ENCODE measurements at regions of chr12 and their contacts with region 1.

Region 1: DNA sequence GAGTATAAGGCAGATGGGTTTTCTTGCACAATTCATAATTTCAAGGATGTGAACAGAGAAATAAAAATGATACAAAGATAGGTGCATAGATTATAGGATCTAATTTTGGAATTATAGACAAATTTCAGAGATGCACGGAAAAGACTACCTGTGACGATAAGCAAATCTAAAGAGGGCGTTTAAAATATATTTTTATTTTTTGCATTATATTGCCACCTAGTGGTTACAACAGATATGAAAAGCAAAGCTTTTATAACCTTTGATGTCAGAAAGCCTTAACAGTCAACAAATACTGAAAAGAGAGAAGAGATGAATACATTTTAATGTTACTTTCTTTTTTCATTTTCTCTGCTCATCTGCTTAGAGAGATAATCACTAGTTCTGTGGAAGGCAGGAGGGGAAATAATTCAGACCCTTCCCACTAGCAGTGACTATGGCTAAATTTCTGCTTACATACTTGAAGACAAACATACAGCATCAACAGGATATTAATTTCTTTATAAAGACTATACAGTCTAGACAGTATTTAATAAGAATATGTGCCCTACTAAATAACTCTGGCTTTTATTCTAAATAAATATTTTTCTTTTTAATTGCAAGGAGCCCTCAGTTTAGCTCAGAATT is 46.3 kb downstream of the NTS start:
- DNase-seq: no peak
- ATAC-seq: peak; percentile 39
- H3K4me3 Mint-ChIP-seq: no peak overlapping the region
- H3K27ac Mint-ChIP-seq: no peak overlapping the region
- H3K4me1 Mint-ChIP-seq: no peaks in the 10 kb centered on the region
- H3K27me3 Mint-ChIP-seq: no peaks in the 10 kb centered on the region

Region 2: GRCh38 chr12:84294246-84294645 is 1626.2 kb before region 1 on chr12:
- CTCF ChIA-PET with region 1: no interaction called
- POLR2A ChIA-PET with region 1: no interaction called
- intact Hi-C with region 1: no loop called
- DNase-seq: no peak
- ATAC-seq: no peak
- H3K4me3 Mint-ChIP-seq: no peak overlapping the region
- H3K27ac Mint-ChIP-seq: no peak overlapping the region
- H3K4me1 Mint-ChIP-seq: no peaks in the 10 kb centered on the region
- H3K27me3 Mint-ChIP-seq: no peaks in the 10 kb centered on the region

Region 3: DNA sequence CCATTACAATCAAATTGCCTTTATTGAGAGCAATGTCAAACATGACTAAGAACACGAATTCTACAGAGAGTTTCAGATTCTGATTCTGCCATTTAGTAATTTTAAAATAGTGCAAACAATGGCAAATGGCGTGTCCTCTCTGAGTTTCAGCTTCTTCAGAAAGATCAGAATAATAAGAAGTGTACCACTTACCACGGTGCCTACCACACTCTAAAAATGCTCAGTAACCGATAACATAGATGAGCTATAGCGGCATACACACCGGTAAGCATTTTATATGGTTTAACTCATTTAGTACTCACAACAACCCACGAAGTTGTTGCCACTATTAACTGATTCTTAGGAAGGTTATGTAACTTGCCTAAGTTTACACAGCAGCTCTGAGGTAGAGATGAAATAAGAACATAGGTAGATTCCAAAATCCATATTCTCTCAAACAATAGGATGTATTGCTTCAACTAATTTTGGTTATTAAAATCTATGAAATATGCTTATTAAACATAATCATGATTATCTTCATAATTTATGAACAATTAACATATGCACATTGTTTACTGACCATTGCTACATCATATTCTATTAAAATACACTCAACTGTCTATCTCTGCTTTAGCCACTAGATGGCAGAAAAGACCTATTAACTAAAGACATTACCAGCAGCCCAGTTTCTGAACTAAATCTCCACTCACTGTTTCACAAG is 1046.2 kb before region 1 on chr12:
- CTCF ChIA-PET with region 1: interaction called, 3 read pairs
- POLR2A ChIA-PET with region 1: no interaction called
- intact Hi-C with region 1: loop called in 1 of 2 experiments (anchors 5 kb)
- DNase-seq: no peak
- ATAC-seq: peak; percentile 53
- H3K4me3 Mint-ChIP-seq: no peak overlapping the region
- H3K27ac Mint-ChIP-seq: no peak overlapping the region
- H3K4me1 Mint-ChIP-seq: no peaks in the 10 kb centered on the region
- H3K27me3 Mint-ChIP-seq: peaks cover 5% of the 10 kb centered on the region

Region 4: DNA sequence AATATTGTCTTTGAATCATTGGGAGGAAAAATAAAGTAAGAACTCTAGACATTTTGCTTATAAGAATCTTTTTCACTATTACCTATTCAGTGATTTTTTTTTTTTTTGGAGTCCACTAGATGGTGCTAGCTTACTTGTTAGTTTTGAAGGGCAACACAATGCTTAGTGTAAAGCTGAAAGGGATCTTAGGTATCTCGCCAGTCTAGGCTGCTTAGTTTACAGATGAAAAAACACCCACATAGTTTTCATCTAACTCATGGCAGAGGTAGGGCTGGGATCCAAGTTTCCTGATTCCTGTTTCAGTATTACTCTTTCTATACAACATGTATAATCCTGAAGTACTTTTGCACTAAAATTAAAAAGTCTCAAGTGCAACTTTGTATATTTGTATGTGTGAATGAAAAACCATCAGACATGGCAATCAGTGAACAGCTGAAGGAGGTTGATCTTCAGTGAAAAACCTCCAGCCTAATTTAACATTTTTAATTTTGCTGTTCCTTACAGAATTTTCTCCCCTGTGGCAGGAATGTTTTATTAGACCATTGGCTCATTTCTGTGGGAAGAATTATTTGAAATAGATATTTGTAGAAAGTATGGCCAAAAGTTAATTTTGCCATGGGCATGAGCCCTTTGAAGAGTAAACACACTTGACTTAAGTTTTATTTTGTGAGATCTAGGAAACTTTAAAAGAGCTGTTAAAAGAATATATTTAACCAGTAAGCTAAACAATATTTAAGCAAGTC is 843.6 kb before region 1 on chr12:
- CTCF ChIA-PET with region 1: interaction called, 3 read pairs
- POLR2A ChIA-PET with region 1: no interaction called
- intact Hi-C with region 1: loop called in 1 of 2 experiments (anchors 5 kb)
- DNase-seq: no peak
- ATAC-seq: peak; percentile 60
- H3K4me3 Mint-ChIP-seq: no peak overlapping the region
- H3K27ac Mint-ChIP-seq: no peak overlapping the region
- H3K4me1 Mint-ChIP-seq: no peaks in the 10 kb centered on the region
- H3K27me3 Mint-ChIP-seq: no peaks in the 10 kb centered on the region

Region 5: DNA sequence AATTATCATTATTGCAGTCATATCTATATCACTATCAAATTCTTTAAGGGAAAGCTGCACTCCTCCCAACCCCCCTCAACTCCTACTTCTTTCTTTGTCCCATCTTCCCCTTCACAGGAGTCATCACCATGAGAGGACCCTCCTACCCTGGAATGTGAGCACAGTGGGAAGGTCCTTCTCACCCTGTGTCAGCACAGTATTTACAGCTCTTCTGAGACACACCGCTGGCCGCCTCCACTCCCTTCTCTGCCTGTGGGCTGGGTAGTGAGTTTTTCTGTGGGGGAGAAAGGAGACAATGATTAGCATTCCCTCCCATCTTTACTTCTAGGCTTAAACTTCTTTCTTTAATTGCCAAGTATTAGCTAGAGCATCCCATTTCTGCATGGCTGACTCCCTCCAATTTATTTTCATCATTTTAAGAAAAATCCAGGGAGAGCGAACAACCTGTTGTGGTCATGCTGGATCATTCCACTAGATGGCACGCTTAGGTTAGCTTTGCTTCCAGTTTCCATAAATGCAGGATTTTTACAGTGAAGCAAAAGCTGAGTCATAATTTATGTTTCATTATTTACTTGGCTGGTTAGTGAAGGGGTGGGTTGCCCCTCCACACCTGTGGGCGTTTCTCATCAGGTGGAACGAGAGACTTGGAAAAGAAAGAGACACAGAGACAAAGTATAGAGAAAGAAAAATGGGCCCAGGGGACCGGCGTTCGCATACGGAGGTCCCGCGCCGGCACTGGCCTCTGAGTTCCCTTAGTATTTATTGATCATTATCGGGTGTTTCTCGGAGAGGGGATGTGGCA is 451.9 kb before region 1 on chr12:
- CTCF ChIA-PET with region 1: interaction called, 7 read pairs
- POLR2A ChIA-PET with region 1: no interaction called
- intact Hi-C with region 1: loop called (anchors 1 to 2 kb)
- DNase-seq: peak; percentile 61
- ATAC-seq: peak; percentile 80
- H3K4me3 Mint-ChIP-seq: peak overlapping the region; percentile 56
- H3K27ac Mint-ChIP-seq: peak overlapping the region; percentile 49
- H3K4me1 Mint-ChIP-seq: peaks cover 14% of the 10 kb centered on the region
- H3K27me3 Mint-ChIP-seq: peaks cover 6% of the 10 kb centered on the region

Region 6: DNA sequence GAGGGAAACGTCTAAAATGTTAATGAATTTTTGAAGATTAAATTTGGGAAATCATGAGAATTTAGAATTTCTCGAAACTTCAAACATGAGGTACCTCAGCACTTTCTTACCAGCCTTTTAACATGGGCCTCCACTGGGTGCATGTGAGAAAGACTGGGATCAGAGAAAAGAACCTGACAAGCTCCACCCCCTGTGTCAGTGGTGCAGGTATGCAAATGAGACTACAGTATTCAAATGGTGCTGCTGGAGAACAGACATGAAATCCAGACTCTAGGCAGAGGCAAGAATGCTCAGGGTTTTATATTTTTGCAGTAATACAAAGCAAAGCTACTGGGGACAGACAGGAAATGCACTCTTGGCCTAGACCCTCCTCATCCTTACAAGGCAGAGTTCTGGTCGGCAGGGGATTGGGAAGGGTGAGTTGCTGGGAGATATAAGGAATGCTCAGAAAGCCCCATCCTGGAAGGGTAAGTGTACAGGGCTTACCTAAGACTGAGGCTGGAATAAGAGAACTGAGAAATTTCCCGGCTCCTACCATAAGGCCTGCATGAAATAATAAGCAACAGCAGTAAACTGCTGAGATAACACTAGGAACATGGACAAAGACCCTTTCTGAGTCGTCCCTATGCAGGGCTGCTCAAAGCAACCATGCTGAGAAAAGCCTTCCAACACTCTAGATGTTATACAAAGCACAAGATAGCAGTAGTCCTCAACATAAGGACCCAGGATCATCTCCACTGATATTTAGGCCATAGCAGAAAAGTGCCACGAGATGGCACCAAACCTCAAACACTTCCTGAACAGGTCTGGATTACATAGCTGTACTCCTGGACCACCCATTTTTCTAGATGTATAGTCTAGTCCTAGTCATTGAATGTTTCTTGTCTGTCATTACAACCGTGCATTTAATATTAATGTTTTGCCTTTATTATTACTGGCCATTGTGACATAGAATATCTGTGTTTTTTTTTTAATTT is 345.0 kb before region 1 on chr12:
- CTCF ChIA-PET with region 1: no interaction called
- POLR2A ChIA-PET with region 1: no interaction called
- intact Hi-C with region 1: loop called (anchors 1 to 5 kb)
- DNase-seq: peak; percentile 53
- ATAC-seq: peak; percentile 68
- H3K4me3 Mint-ChIP-seq: no peak overlapping the region
- H3K27ac Mint-ChIP-seq: no peak overlapping the region
- H3K4me1 Mint-ChIP-seq: no peaks in the 10 kb centered on the region
- H3K27me3 Mint-ChIP-seq: no peaks in the 10 kb centered on the region

Region 7: GRCh38 chr12:85866986-85867776 is 53.3 kb before region 1 on chr12:
- CTCF ChIA-PET with region 1: interaction called, 10 read pairs
- POLR2A ChIA-PET with region 1: no interaction called
- intact Hi-C with region 1: no loop called
- DNase-seq: peak; percentile 30
- ATAC-seq: peak; percentile 30
- H3K4me3 Mint-ChIP-seq: no peak overlapping the region
- H3K27ac Mint-ChIP-seq: no peak overlapping the region
- H3K4me1 Mint-ChIP-seq: no peaks in the 10 kb centered on the region
- H3K27me3 Mint-ChIP-seq: no peaks in the 10 kb centered on the region

Region 8: GRCh38 chr12:87848248-87848868 is 1927.9 kb after region 1 on chr12:
- CTCF ChIA-PET with region 1: interaction called, 7 read pairs
- POLR2A ChIA-PET with region 1: no interaction called
- intact Hi-C with region 1: loop called (anchors 2 to 10 kb)
- DNase-seq: no peak
- ATAC-seq: no peak
- H3K4me3 Mint-ChIP-seq: no peak overlapping the region
- H3K27ac Mint-ChIP-seq: no peak overlapping the region
- H3K4me1 Mint-ChIP-seq: no peaks in the 10 kb centered on the region
- H3K27me3 Mint-ChIP-seq: peaks cover 6% of the 10 kb centered on the region

Measured in activated CD4-positive, alpha-beta T cell treated with anti-CD3 and anti-CD28 coated beads for 36 hours (primary cell).